ENCODE measurements at regions of chr13 and their contacts with region 1.

Region 1: GRCh38 chr13:97809576-97809975 is 143.9 kb upstream of the IPO5 start:
- DNase-seq: no peak
- ATAC-seq: no peak

Region 2: DNA sequence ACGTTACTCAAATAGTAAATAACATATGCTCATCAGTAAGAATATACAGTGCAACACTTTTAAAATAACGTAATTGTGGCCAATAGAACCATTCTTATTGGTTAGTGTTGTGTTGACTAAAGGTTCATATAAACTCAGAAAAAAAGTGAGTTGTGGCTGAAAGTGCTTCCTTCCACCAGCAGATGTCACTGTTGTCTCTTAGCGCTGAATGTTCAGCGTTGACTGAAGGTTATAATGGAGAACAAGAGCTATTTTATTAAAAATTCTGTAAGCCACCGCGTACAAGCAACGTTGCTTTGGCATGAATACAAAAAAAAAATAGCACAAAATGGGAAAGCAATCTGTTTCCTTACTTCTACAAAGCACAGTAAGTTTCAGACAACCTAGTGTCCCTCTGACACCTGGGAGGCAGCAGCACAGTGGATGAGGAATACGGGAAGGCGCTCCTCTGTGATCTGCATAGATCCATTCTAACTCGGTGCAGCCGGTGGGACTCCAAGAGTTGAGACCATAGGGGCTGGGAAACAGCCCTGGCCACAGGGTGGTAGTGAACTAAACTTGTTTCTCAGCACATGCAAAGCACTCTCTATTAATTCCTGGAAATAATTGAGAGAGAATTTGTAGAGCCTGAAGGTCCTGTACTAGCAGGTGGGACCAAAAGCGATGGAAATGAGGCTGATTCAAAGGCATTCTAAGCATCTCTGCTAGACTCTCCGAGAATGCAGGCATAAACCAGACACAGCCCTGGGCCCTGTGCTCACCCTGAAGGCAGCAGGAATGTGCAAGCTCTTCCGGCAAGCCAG is 791.3 kb before region 1 on chr13:
- intact Hi-C with region 1: loop called (anchors 10 kb)
- DNase-seq: no peak
- ATAC-seq: peak; percentile 79

Region 3: DNA sequence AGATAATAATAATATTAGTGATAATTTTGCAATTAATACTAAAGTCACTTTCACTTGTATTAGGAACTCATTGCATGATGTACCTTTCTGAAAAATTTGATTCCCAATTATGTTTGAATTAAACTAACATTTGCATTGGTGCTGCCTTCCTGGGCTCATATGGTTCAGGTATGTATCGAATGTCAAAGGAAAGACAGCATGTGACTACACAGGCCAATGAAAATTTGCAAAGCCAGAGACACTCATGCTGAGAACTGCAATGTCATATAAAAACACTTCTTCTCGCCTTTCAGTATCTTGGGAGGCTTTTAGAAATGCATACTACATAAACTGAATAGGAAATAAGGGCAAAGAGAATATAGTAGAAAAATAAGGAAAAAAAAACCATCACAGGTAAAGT is 331.3 kb before region 1 on chr13:
- intact Hi-C with region 1: no loop called
- DNase-seq: no peak
- ATAC-seq: no peak

Region 4: DNA sequence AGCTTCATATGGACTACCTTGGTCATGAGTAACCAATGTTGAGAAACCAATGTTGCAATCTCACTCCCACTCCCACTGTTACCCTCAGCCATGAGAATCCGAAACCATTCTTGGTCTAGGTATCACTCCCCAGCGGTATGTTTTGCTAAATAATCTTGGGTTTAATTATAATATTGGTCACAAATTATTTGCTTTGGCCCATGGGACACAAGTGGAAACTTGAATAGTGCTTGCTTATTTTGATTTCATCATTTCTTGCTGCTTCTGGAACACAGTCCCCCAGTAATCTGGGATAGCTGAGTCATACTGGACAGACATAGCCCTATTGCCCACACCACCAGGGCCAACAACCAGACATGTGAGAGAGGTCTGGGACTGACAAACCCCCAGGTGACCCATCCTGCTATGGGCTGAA is 27.7 kb before region 1 on chr13:
- intact Hi-C with region 1: no loop called
- DNase-seq: peak; percentile 65
- ATAC-seq: peak; percentile 95

Region 5: DNA sequence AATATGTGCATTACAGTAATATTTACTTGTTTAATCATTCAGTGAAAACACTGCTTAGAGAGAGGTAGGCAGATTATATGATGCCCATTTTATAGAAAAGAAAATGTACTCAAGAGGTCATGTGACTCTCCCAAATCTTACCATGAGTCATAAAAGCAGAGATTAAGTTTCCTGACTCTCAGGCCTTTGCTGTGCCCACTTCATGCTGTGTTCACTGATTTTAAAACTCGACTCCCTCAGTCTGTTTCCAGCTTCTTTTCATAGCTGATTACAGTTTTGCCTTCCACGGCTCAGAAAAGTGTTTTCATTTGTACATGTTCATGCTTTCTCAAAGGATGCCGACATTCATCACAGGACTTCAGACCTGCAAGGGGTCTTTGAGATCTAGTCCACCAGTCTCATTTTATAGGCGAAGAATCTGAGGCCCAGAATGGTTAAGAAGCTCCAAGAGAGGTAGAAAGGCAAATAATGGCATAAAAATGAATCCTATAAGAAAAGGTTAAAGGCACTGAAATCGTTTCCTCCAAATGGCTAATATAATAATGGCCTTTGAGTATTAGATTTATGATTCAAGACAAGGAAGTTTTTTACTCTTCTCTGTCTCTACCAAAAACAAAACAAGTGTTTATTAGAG is 134.9 kb after region 1 on chr13:
- intact Hi-C with region 1: no loop called
- DNase-seq: no peak
- ATAC-seq: no peak